MCF 10A (cell line): ENCODE measurements at regions of chr3 and their contacts with region 1.

Region 1: GRCh38 chr3:187738331-187739093 is 6.8 kb downstream of the BCL6 start:
- DNase-seq: peak; percentile 95
- H3K4me3 Mint-ChIP-seq: peak overlapping the region; percentile 98
- H3K27ac Mint-ChIP-seq: peak overlapping the region; percentile 100
- H3K4me1 Mint-ChIP-seq: peaks cover 44% of the 10 kb centered on the region
- H3K27me3 Mint-ChIP-seq: no peaks in the 10 kb centered on the region
- CTCF ChIP-seq: peak; percentile 63

Region 2: DNA sequence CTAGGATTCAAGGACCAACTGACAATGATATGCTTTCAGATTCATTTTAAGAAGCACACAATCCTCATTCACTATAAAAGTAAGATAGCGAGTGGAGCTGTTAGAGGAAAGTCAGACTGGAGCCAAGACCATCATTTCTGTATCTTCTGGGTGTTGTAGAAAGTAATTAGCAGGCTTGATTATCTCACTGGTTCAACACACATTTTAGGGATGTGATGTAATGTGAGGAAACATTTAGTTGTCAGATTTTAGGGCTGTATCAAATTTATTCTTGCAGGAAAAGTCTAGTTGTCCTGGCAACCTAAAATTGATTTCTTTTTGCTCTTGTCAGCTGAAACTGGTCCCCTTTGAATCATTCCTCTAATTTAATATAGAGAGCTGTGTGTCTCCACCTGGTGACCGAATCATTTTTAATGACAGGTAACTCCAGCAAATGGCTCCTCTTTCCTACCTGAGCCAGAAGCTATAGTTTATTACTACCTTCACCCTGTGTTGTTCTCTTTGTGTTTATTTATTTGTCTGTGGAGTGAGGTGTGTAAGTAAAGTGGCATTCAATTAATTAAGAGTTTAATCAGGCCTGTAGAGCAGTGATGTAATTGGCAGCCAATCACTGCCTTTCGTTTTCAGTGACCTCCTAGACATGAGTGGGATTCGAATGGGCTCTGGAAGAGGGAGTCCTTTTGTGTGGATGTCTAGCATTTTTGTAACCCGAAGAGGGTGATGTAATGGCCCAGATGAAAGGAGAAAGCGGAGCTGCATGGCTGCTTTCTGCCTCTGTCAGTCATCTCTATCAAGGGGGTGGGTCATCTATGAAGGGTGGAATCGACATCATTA is 541.2 kb after region 1 on chr3:
- CTCF ChIA-PET with region 1: interaction called, 4 read pairs
- POLR2A ChIA-PET with region 1: interaction called, 3 read pairs
- intact Hi-C with region 1: loop called (anchors 5 kb)
- DNase-seq: no peak
- H3K4me3 Mint-ChIP-seq: no peak overlapping the region
- H3K27ac Mint-ChIP-seq: no peak overlapping the region
- H3K4me1 Mint-ChIP-seq: peaks cover 37% of the 10 kb centered on the region
- H3K27me3 Mint-ChIP-seq: no peaks in the 10 kb centered on the region
- CTCF ChIP-seq: no peak

Region 3: DNA sequence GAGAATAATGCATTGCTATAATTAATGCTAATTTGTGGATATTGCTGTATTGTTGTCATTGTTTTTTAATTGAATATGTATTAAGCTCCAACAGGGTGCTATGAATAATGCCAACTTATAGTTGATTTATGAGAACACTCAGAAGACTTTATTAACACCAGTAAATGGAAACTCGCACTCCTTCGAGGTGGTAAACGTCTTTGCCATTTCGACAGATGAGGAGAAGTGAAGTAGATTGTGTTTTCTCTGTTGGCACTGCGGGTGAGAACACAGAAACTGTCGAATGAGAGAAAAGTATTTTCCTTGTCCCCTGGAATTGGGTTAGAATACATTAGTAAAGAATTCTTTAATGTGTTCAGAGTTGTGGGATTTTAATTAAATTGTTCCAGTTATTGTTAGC is 769.9 kb after region 1 on chr3:
- CTCF ChIA-PET with region 1: no interaction called
- POLR2A ChIA-PET with region 1: no interaction called
- intact Hi-C with region 1: no loop called
- DNase-seq: no peak
- H3K4me3 Mint-ChIP-seq: no peak overlapping the region
- H3K27ac Mint-ChIP-seq: no peak overlapping the region
- H3K4me1 Mint-ChIP-seq: peaks cover 16% of the 10 kb centered on the region
- H3K27me3 Mint-ChIP-seq: no peaks in the 10 kb centered on the region
- CTCF ChIP-seq: no peak

Region 4: GRCh38 chr3:188531210-188531609 is 792.7 kb after region 1 on chr3:
- CTCF ChIA-PET with region 1: interaction called, 12 read pairs
- POLR2A ChIA-PET with region 1: interaction called, 7 read pairs
- intact Hi-C with region 1: no loop called
- DNase-seq: peak; percentile 64
- H3K4me3 Mint-ChIP-seq: no peak overlapping the region
- H3K27ac Mint-ChIP-seq: no peak overlapping the region
- H3K4me1 Mint-ChIP-seq: peaks cover 9% of the 10 kb centered on the region
- H3K27me3 Mint-ChIP-seq: no peaks in the 10 kb centered on the region
- CTCF ChIP-seq: no peak

Region 5: GRCh38 chr3:188830893-188831292 is 1092.4 kb after region 1 on chr3:
- CTCF ChIA-PET with region 1: interaction called, 8 read pairs
- POLR2A ChIA-PET with region 1: interaction called, 21 read pairs
- intact Hi-C with region 1: loop called (anchors 5 kb)
- DNase-seq: peak; percentile 45
- H3K4me3 Mint-ChIP-seq: no peak overlapping the region
- H3K27ac Mint-ChIP-seq: no peak overlapping the region
- H3K4me1 Mint-ChIP-seq: peaks cover 21% of the 10 kb centered on the region
- H3K27me3 Mint-ChIP-seq: no peaks in the 10 kb centered on the region
- CTCF ChIP-seq: no peak

Region 6: DNA sequence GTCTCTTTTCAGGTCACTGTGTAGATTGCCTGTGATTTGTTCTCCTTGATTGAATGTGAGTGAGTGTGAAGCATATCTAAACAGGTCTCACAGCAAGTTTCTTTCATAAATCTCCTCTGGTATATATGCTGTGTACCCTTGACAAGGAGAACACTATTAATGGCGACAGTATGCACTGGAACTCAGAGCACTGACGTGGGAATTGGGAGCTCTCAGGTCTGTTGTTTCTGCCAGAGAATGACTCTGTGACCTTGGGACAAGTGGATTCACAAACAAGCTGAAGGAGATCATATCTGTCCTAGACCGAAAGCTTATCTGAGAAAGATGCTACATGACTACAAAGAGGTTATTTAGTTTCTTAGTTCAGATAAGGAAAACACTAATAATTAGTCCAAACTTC is 1107.0 kb after region 1 on chr3:
- CTCF ChIA-PET with region 1: no interaction called
- POLR2A ChIA-PET with region 1: no interaction called
- intact Hi-C with region 1: no loop called
- DNase-seq: no peak
- H3K4me3 Mint-ChIP-seq: no peak overlapping the region
- H3K27ac Mint-ChIP-seq: no peak overlapping the region
- H3K4me1 Mint-ChIP-seq: peaks cover 18% of the 10 kb centered on the region
- H3K27me3 Mint-ChIP-seq: no peaks in the 10 kb centered on the region
- CTCF ChIP-seq: no peak

Region 7: DNA sequence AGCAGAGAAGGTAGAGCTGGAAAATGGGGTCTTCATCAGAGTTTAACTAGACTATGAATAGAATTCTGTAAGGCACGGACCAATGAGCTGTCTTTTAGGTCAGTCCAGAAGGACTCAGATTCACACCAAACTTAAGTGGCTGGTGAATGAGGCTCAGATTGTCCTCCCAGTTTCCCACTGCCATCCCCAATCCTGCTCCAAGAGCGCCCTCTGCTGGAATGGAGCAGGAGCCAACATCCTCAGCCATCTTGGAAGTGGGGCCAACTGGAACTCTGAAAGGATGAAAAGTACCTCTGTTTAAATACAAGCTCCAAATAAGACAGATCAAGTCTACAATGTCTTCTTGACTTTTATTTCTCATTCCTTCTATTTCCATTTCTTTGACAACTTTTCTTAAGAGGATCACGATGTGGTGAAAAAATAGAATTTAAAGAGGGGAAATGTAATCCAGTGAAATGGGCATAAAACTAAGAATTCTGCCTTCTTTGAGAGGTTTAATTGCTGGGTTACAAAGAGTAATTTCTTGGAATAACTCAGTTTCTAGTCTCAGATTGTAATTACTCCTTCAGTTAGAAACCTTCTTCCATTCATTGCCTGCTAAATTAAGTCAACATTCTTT is 1216.2 kb after region 1 on chr3:
- CTCF ChIA-PET with region 1: interaction called, 240 read pairs
- POLR2A ChIA-PET with region 1: interaction called, 252 read pairs
- intact Hi-C with region 1: loop called (anchors 1 kb)
- DNase-seq: peak; percentile 94
- H3K4me3 Mint-ChIP-seq: no peak overlapping the region
- H3K27ac Mint-ChIP-seq: no peak overlapping the region
- H3K4me1 Mint-ChIP-seq: peaks cover 11% of the 10 kb centered on the region
- H3K27me3 Mint-ChIP-seq: no peaks in the 10 kb centered on the region
- CTCF ChIP-seq: peak; percentile 92